Activated CD4-positive, alpha-beta memory T cell treated with anti-CD3 and anti-CD28 coated beads for 36 hours (primary cell): ENCODE measurements at regions of chr12 and their contacts with region 1.

Region 1: GRCh38 chr12:67648521-67649260 is at the start of gene DYRK2:
- DNase-seq: peak; percentile 75
- H3K4me3 Mint-ChIP-seq: peak within 1 kb of the TSS; percentile 85
- H3K27ac Mint-ChIP-seq: peak within 1 kb of the TSS; percentile 79
- H3K4me1 Mint-ChIP-seq: peaks cover 45% of the 10 kb centered on the region
- H3K27me3 Mint-ChIP-seq: no peaks in the 10 kb centered on the region
- total RNA-seq, gene DYRK2: 22.8 to 24.2 TPM

Region 2: DNA sequence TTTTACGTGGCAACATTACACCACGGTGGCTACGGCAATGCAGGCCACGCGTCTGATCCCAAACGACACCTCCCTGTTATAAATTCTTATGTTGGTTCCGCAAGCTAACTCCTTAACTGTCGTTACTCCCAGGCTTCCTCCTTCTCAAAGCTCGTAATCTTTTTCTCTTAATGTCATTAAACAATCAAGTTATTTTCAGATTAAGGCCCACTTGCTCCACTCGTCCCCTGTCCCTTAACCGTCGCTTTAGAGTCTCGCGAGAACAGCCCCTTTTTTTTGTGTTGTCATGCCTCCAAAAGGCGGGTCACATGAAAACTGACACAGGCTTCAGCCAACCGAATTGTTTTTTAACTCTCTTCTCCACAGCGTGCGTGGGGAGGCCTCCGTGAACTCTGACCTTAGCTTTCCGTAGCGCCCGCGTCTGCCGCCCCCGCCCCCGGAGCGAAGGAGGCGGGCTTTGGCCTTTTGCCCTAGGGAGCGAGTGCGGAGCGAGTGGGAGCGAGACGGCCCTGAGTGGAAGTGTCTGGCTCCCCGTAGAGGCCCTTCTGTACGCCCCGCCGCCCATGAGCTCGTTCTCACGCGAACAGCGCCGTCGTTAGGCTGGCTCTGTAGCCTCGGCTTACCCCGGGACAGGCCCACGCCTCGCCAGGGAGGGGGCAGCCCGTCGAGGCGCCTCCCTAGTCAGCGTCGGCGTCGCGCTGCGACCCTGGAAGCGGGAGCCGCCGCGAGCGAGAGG is 379.6 kb before region 1 on chr12 and contains the start of gene CAND1:
- CTCF ChIA-PET with region 1: no interaction called
- POLR2A ChIA-PET with region 1: interaction called, 10 read pairs
- intact Hi-C with region 1: loop called (anchors 1 kb)
- DNase-seq: peak; percentile 96
- H3K4me3 Mint-ChIP-seq: peak within 1 kb of the TSS; percentile 95
- H3K27ac Mint-ChIP-seq: peak within 1 kb of the TSS; percentile 98
- H3K4me1 Mint-ChIP-seq: peaks cover 31% of the 10 kb centered on the region
- H3K27me3 Mint-ChIP-seq: no peaks in the 10 kb centered on the region
- total RNA-seq, gene CAND1: 213 to 219 TPM

Region 3: GRCh38 chr12:67441736-67442346 is 206.8 kb before region 1 on chr12:
- CTCF ChIA-PET with region 1: no interaction called
- POLR2A ChIA-PET with region 1: no interaction called
- intact Hi-C with region 1: loop called (anchors 2 kb)
- DNase-seq: peak; percentile 89
- H3K4me3 Mint-ChIP-seq: peak overlapping the region; percentile 35
- H3K27ac Mint-ChIP-seq: peak overlapping the region; percentile 44
- H3K4me1 Mint-ChIP-seq: peaks cover 21% of the 10 kb centered on the region
- H3K27me3 Mint-ChIP-seq: peaks cover 4% of the 10 kb centered on the region

Region 4: GRCh38 chr12:67578976-67579661 is 69.6 kb before region 1 on chr12:
- CTCF ChIA-PET with region 1: no interaction called
- POLR2A ChIA-PET with region 1: no interaction called
- intact Hi-C with region 1: no loop called
- DNase-seq: peak; percentile 22
- H3K4me3 Mint-ChIP-seq: no peak overlapping the region
- H3K27ac Mint-ChIP-seq: peak overlapping the region; percentile 14
- H3K4me1 Mint-ChIP-seq: peaks cover 36% of the 10 kb centered on the region
- H3K27me3 Mint-ChIP-seq: no peaks in the 10 kb centered on the region

Region 5: DNA sequence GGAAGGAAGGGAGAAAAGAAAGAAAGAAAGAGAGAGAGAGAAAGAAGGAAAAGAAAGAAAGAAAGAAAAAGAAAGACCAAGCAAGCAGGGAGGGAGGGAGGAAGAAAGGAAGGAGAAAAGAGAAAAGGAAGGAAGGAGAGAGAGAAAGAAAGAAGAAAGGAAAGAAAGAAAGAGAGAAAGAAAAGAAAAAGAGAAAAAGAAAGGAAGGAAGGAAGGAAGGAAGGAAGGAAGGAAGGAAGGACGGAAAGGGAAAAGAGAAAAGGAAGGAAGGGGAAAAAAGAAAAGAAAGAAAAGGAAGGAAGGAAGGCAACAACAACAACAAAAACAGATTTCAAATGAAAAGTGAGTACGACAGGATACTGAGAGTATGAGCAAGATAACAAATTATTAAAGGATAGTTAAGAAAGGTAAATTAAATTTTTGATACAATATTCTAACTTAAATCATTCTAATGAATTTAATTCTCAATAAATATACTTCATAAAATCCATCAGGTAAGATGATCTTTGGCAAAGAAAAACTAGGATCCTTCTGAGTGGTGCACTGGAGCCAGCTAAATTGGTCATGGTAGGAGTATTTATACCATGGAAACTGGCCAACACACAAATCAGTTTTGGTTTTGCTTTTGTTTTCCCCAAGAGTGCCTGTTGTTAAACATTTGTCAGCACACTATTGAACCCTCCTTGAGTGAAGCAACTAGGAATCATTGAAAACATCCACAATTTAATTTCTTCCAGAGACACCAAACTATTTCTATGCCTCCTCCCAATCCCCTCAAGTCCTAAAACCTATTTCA is 56.3 kb before region 1 on chr12:
- CTCF ChIA-PET with region 1: no interaction called
- POLR2A ChIA-PET with region 1: no interaction called
- intact Hi-C with region 1: loop called (anchors 5 kb)
- DNase-seq: no peak
- H3K4me3 Mint-ChIP-seq: no peak overlapping the region
- H3K27ac Mint-ChIP-seq: peak overlapping the region; percentile 67
- H3K4me1 Mint-ChIP-seq: peaks cover 47% of the 10 kb centered on the region
- H3K27me3 Mint-ChIP-seq: no peaks in the 10 kb centered on the region

Region 6: DNA sequence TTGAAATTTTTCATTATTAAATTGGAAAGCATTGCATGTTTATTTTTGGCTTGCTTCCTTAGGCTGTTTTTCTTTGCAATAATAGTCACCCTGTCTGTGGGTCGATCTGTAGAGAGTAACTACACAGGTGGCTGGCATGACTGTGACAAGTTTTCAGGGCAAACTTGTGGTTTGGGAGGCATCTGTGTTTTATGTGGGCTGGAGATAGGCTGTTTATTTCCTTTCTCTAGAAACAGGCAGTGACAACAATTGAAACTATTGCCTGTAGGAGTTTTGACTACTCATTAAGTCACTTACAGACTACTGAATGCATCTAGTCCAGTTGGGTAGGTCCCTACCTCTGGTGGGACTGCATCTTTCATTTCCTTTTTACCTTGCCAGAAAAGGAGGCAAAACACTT is 155.5 kb after region 1 on chr12:
- CTCF ChIA-PET with region 1: no interaction called
- POLR2A ChIA-PET with region 1: no interaction called
- intact Hi-C with region 1: loop called (anchors 5 kb)
- DNase-seq: peak; percentile 80
- H3K4me3 Mint-ChIP-seq: no peak overlapping the region
- H3K27ac Mint-ChIP-seq: no peak overlapping the region
- H3K4me1 Mint-ChIP-seq: peaks cover 31% of the 10 kb centered on the region
- H3K27me3 Mint-ChIP-seq: no peaks in the 10 kb centered on the region

Region 7: GRCh38 chr12:67943226-67943892 is 294.7 kb after region 1 on chr12:
- CTCF ChIA-PET with region 1: interaction called, 19 read pairs
- POLR2A ChIA-PET with region 1: no interaction called
- intact Hi-C with region 1: loop called (anchors 1 kb)
- DNase-seq: peak; percentile 57
- H3K4me3 Mint-ChIP-seq: no peak overlapping the region
- H3K27ac Mint-ChIP-seq: no peak overlapping the region
- H3K4me1 Mint-ChIP-seq: peaks cover 2% of the 10 kb centered on the region
- H3K27me3 Mint-ChIP-seq: peaks cover 8% of the 10 kb centered on the region